Adrenal gland (tissue), 19 donors: ENCODE measurements at regions of chr4 and their contacts with region 1.

Region 1: DNA sequence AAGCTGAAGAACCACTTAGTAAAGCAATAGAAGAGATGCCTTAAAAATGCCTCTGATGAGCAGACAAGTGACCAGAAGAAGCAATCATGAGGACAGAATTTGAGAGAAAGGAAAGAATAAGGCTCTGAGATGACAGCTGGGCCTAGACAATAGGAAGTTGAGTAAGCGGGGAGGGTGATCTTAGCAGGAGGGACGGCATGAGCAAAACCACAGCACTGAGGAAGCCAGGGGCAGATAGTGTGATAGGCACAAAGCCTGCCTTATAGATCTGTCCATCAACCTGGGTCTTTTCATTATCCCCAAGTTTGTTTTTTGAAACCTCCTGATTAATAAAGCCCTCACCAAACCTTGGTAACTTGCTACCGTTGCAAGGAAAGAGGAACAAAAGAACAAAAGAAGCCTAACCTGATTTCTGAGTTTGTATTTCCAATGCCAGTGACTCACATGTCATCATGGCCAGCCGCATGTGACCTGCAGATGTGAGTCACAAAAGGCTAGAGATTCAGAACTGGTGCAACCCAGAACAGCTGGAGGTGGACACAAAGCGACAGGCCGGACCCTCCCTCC is 55.7 kb upstream of the PPARGC1A start:
- DNase-seq: peak; percentile 65 to 93 (median 86)
- H3K4me3 ChIP-seq: no peak overlapping the region
- H3K27ac ChIP-seq: peak overlapping the region in 4 of 5 donors; percentile 69 to 87 (median 84)
- H3K4me1 ChIP-seq: peaks cover 11 to 14% of the 10 kb centered on the region in 2 donors
- H3K27me3 ChIP-seq: no peaks in the 10 kb centered on the region
- CTCF ChIP-seq: no peak
- POLR2A ChIP-seq: peak in 1 of 2 donors; percentile 64

Region 2: GRCh38 chr4:23889814-23890341 is 55.7 kb before region 1 on chr4 and contains the start of gene PPARGC1A:
- intact Hi-C with region 1: loop called in 1 of 2 experiments (anchors 10 kb)
- DNase-seq: peak; percentile 56 to 85 (median 65)
- H3K4me3 ChIP-seq: peak within 1 kb of the TSS in 3 of 4 donors; percentile 2 to 75 (median 58)
- H3K27ac ChIP-seq: peak within 1 kb of the TSS in 4 of 5 donors; percentile 81 to 90 (median 84)
- H3K4me1 ChIP-seq: peaks cover 0 to 23% of the 10 kb centered on the region in 2 donors
- H3K27me3 ChIP-seq: no peaks in the 10 kb centered on the region
- CTCF ChIP-seq: no peak
- POLR2A ChIP-seq: peak in 1 of 2 donors; percentile 84
- total RNA-seq, gene PPARGC1A: 2.8 to 14.3 (median 6.2) TPM

Region 3: DNA sequence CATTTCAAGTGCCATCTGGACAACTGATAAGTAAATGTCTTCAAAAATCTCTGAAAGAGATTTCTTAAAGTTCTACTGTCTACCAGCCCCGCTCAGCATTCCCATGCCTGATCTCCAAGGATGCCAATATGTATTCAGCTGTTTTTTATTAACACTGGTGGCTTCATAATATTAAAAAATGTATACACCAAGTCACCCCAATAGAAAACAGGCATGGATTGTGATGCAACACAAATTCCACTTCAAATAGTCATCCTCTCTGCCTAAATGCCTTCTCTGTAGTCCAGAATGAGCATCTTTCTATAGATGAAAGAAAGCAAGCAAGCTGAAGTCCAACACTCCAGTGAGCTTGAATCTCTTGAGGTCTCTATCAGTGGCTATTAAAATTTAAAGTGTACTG is 96.6 kb after region 1 on chr4:
- intact Hi-C with region 1: no loop called
- DNase-seq: no peak
- H3K4me3 ChIP-seq: no peak overlapping the region
- H3K27ac ChIP-seq: no peak overlapping the region
- H3K4me1 ChIP-seq: no peaks in the 10 kb centered on the region
- H3K27me3 ChIP-seq: no peaks in the 10 kb centered on the region
- CTCF ChIP-seq: no peak
- POLR2A ChIP-seq: no peak